Activated B cell treated with CpG ODN at 0.5 μM for 24 hours (primary cell): ENCODE measurements at regions of chr4 and their contacts with region 1.

Region 1: DNA sequence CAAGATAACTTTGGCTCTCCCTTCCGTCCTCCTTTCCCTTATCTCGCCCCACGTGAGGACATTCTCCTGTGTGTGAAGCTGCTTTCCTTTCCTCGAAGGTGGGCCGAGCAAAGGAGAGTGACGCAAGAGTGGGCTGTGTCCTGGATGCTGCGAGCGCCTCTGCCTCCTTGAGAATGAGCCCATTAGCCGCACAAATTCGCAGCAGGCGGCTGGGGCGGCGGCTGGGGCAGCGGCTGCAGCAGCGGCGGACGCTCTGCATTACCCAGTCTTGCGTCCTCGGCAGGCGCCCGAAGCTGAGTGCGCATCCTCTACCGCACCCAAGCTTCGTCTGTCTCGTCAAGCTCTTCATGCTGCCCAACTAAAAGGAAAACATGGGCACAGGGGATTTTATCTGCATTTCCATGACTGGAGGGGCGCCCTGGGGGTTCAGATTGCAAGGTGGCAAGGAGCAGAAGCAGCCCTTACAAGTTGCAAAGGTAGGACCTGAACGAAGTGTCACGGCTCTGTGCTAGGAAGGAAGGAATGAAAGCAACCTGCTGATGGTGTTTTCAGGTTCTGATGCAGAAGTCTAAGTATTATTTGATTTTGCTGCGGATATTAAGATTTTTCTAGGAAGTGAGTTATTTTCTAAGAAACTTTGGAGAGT is at the start of gene SYNPO2:
- DNase-seq: peak; percentile 22
- ATAC-seq: peak; percentile 47
- H3K4me3 Mint-ChIP-seq: peak within 1 kb of the TSS; percentile 75
- H3K27ac Mint-ChIP-seq: no peak within 1 kb of the TSS
- H3K4me1 Mint-ChIP-seq: peaks cover 16% of the 10 kb centered on the region
- H3K27me3 Mint-ChIP-seq: peaks cover 37% of the 10 kb centered on the region
- CTCF ChIP-seq: no peak
- total RNA-seq, gene SYNPO2: 0.18 and 0.24 TPM in 2 replicates

Region 2: GRCh38 chr4:118740869-118741268 is 147.9 kb before region 1 on chr4:
- CTCF ChIA-PET with region 1: interaction called, 15 read pairs
- POLR2A ChIA-PET with region 1: no interaction called
- intact Hi-C with region 1: loop called (anchors 1 kb)
- DNase-seq: no peak
- ATAC-seq: no peak
- H3K4me3 Mint-ChIP-seq: no peak overlapping the region
- H3K27ac Mint-ChIP-seq: no peak overlapping the region
- H3K4me1 Mint-ChIP-seq: no peaks in the 10 kb centered on the region
- H3K27me3 Mint-ChIP-seq: no peaks in the 10 kb centered on the region
- CTCF ChIP-seq: peak; percentile 37

Region 3: DNA sequence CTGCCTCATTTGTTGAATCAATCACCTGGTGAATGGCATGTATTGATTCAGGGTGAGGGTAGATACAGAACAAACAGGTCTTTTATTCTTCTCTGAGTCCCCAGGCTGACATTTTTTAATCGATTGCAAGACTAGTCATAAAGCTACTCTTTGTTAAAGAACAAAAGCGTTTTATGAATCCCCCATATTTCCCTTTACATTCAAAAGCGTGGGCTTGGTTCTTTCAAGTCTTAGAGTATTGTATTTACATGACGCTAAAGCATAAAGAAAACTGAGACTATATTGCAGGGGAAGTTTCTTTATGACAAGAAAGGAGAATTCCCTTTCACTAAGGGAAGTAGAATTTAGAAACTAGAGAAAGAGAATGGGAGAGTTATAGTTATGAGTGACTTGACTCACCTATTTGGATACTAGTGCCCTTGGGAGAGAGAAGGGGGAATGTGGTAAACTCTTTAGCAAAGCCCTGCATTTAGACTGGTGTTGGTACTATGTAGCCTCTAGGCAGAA is 809.2 kb after region 1 on chr4:
- CTCF ChIA-PET with region 1: no interaction called
- POLR2A ChIA-PET with region 1: no interaction called
- intact Hi-C with region 1: no loop called
- DNase-seq: no peak
- ATAC-seq: no peak
- H3K4me3 Mint-ChIP-seq: no peak overlapping the region
- H3K27ac Mint-ChIP-seq: no peak overlapping the region
- H3K4me1 Mint-ChIP-seq: no peaks in the 10 kb centered on the region
- H3K27me3 Mint-ChIP-seq: peaks cover 5% of the 10 kb centered on the region
- CTCF ChIP-seq: no peak